Transverse colon (tissue), 4 donors: ENCODE measurements at regions of chr1 and their contacts with region 1.

Region 1: GRCh38 chr1:224513787-224514209 is 79.2 kb upstream of the WDR26 start:
- DNase-seq: peak; percentile 89
- H3K4me3 ChIP-seq: no peak overlapping the region
- H3K27ac ChIP-seq: no peak overlapping the region
- H3K4me1 ChIP-seq: peaks cover 0 to 27% (median 13%) of the 10 kb centered on the region in 4 donors
- H3K27me3 ChIP-seq: no peaks in the 10 kb centered on the region
- CTCF ChIP-seq: peak; percentile 88 to 94 (median 90)
- EP300 ChIP-seq: no peak
- POLR2A ChIP-seq: no peak

Region 2: GRCh38 chr1:223153177-223154119 is 1360.3 kb before region 1 on chr1:
- in situ Hi-C with region 1: no loop called
- intact Hi-C with region 1: no loop called
- DNase-seq: no peak
- H3K4me3 ChIP-seq: no peak overlapping the region
- H3K27ac ChIP-seq: no peak overlapping the region
- H3K4me1 ChIP-seq: no peaks in the 10 kb centered on the region
- H3K27me3 ChIP-seq: no peaks in the 10 kb centered on the region
- CTCF ChIP-seq: no peak
- EP300 ChIP-seq: no peak
- POLR2A ChIP-seq: no peak

Region 3: DNA sequence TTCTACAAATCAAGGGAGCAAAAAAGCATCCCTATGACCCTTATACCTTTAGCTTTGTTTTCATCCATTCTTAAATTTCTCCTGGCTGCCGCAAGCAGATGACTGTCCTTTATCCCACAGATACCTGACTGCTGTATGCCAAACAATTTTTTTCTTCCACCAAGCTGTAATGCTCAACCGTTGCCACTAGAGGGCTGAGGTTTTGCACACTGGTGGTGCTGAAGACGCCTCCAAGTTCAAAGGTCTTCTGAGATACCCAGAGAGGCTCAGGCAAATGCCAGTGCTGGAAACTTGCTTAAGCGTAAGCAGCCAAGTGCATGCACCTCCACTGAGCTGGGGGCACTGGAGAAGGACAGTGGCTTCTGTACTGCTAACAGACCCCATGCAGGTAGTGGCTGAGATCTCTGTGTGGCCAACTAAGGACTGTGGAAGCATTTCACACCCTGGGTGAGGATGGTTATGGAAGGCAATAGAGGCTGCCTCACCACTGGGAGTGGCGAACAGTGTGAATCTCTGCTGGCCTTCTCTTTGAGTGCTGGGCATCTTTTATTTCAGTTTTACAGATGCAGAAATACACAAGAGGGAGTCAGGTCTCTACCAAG is 130.9 kb after region 1 on chr1:
- in situ Hi-C with region 1: loop called in 3 of 4 experiments (anchors 5 to 10 kb)
- intact Hi-C with region 1: no loop called
- DNase-seq: peak; percentile 52
- H3K4me3 ChIP-seq: no peak overlapping the region
- H3K27ac ChIP-seq: no peak overlapping the region
- H3K4me1 ChIP-seq: no peaks in the 10 kb centered on the region
- H3K27me3 ChIP-seq: no peaks in the 10 kb centered on the region
- CTCF ChIP-seq: peak; percentile 80 to 90 (median 89)
- EP300 ChIP-seq: no peak
- POLR2A ChIP-seq: no peak

Region 4: DNA sequence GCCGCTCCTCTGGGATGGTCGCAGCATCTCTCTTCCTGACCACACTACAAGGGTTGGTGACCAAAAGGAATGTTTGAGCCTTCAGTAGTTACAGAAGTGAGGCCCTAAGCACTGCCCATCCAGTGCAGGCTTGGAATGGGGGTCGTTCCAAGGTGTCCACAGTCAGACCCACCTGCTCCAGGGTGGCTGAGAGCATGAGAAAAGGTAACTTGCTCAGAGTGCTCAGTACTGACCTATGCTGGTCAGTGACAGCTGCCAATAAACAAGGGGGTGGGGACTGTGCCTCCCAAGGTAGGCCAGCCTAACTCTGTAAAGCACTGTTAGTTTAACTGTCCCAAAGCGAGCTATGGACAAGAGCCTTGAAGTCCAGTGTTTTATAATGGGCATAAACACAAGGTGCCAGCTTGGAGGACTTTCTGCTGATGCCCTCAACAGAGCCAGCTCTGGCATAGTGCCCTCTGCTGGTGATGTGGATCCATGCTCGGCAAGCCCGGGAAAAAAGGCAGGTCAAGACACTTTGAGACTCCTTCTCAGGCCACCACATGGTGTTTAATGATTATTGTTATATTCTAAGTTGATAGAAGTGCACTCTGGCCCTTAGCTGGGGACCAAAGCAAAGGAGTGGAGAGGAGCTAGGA is 337.5 kb after region 1 on chr1:
- in situ Hi-C with region 1: loop called (anchors 5 to 10 kb)
- intact Hi-C with region 1: loop called (anchors 10 kb)
- DNase-seq: peak; percentile 68
- H3K4me3 ChIP-seq: no peak overlapping the region
- H3K27ac ChIP-seq: no peak overlapping the region
- H3K4me1 ChIP-seq: no peaks in the 10 kb centered on the region
- H3K27me3 ChIP-seq: no peaks in the 10 kb centered on the region
- CTCF ChIP-seq: peak; percentile 49 to 68 (median 63)
- EP300 ChIP-seq: no peak
- POLR2A ChIP-seq: no peak

Region 5: GRCh38 chr1:224914292-224914900 is 400.6 kb after region 1 on chr1:
- in situ Hi-C with region 1: loop called in 1 of 4 experiments (anchors 10 kb)
- intact Hi-C with region 1: no loop called
- DNase-seq: no peak
- H3K4me3 ChIP-seq: no peak overlapping the region
- H3K27ac ChIP-seq: no peak overlapping the region
- H3K4me1 ChIP-seq: no peaks in the 10 kb centered on the region
- H3K27me3 ChIP-seq: no peaks in the 10 kb centered on the region
- CTCF ChIP-seq: no peak
- EP300 ChIP-seq: no peak
- POLR2A ChIP-seq: no peak

Region 6: GRCh38 chr1:224922404-224923164 is 408.8 kb after region 1 on chr1:
- in situ Hi-C with region 1: loop called in 3 of 4 experiments (anchors 10 kb)
- intact Hi-C with region 1: loop called (anchors 5 kb)
- DNase-seq: no peak
- H3K4me3 ChIP-seq: no peak overlapping the region
- H3K27ac ChIP-seq: no peak overlapping the region
- H3K4me1 ChIP-seq: no peaks in the 10 kb centered on the region
- H3K27me3 ChIP-seq: no peaks in the 10 kb centered on the region
- CTCF ChIP-seq: peak; percentile 65 to 79 (median 77)
- EP300 ChIP-seq: no peak
- POLR2A ChIP-seq: no peak